ENCODE measurements at regions of chr12 and their contacts with region 1.

Region 1: DNA sequence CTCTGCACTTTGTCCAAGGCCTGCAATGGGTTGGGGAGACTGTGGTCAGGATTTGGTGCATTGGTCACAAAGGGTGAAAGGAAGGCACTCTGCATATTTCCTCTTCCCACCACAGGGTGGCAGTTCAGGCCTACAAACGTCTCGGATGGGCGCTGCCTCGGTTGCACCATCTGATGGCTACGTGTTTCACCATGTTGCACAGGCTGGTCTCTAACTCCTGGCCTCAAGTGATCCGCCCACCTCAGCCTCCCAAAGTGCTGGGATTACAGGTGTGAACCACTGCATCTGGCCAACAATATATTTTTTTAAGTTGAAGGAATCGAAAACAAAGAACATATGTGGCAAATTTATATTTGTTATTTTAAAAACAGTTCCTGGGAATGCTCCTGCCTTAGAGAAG is 35.1 kb downstream of the TMBIM6 start:
- DNase-seq: peak; percentile 53
- H3K4me3 ChIP-seq: no peak overlapping the region
- H3K27ac ChIP-seq: no peak overlapping the region
- H3K4me1 ChIP-seq: no peaks in the 10 kb centered on the region
- H3K27me3 ChIP-seq: no peaks in the 10 kb centered on the region
- CTCF ChIP-seq: peak; percentile 60

Region 2: DNA sequence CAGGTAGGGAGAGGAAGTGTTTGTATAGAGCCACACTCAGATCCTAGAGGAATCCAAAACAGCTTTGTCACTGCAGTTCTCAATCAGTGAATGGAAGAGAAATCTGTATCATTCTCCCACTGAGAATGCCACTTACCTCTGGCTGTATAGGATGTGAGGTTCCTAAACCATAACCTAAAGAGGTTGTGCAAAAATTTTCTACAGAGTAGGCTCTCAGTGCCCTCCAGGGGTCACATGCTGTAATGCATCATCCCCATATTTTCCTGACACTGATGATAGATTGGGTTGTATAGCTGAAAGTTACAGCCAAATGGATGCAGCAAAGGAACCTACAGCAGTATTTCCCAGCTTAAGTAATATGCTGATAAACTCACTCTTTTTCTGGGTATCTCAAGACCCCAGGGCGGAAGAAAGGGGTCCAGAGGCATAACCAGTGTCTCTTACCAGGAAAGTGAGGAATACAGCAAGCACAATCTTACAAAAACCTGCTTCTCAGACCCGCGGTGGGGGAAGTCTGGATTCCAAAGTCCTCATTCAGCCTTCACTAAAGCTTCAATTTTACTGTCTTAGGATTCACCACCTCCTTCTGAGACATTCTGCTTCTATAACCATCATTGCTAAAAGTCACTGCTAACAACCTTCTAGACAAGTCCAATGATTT is 62.7 kb after region 1 on chr12:
- intact Hi-C with region 1: loop called (anchors 2 kb)
- DNase-seq: no peak
- H3K4me3 ChIP-seq: no peak overlapping the region
- H3K27ac ChIP-seq: no peak overlapping the region
- H3K4me1 ChIP-seq: peaks cover 5% of the 10 kb centered on the region
- H3K27me3 ChIP-seq: no peaks in the 10 kb centered on the region
- CTCF ChIP-seq: peak; percentile 54

Region 3: DNA sequence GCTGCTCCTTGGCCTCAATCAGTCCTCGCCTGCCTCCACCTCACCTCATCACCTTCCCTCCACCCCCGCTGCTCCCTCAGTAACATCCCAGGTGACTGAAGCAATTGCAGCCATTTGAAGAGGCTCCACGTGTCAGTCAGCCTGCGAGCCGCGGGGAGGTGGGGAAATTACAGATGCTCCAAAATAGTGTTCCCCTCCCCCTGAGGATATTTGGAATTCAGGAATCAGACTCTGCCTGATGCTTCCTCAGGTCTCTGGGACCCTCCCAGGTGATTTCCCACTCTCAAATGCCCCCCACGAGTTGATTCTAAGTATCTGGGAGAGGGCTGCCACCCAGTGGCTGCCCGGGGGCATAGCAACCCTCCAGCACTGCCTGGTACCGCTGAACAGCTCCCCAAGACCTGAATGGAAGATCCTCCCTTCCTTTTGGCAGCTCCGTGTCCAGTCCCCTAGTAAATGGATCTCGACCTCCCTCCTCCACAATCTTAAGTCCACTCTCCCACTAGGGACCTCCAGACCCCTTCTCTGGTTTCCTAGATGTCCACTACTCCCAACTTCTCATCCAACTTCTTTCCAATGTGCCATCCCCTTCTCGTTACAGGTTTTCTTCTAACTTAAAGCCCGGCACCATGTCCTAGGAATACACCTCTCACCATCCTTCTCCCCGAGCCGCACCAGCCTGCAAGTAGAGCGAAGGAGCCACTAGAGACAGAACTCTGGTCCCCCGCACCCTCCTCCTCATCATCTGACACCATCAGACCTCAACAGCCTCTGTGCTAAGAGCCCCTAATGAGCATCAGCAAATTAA is 279.6 kb after region 1 on chr12:
- intact Hi-C with region 1: loop called (anchors 5 kb)
- DNase-seq: peak; percentile 40
- H3K4me3 ChIP-seq: no peak overlapping the region
- H3K27ac ChIP-seq: no peak overlapping the region
- H3K4me1 ChIP-seq: peaks cover 5% of the 10 kb centered on the region
- H3K27me3 ChIP-seq: peaks cover 11% of the 10 kb centered on the region
- CTCF ChIP-seq: peak; percentile 96

Measured in colonic mucosa (tissue), 4 donors.